PC-3 (cell line): ENCODE measurements at regions of chr7 and their contacts with region 1.

Region 1: GRCh38 chr7:116122972-116123595 is 87.3 kb upstream of the TES start:
- DNase-seq: peak; percentile 55
- ATAC-seq: peak; percentile 20; the same call in 1 of the 2 replicates
- H3K4me3 ChIP-seq: no peak overlapping the region
- H3K27ac ChIP-seq: no peak overlapping the region
- H3K4me1 ChIP-seq: no peaks in the 10 kb centered on the region
- H3K27me3 ChIP-seq: peaks cover 18% of the 10 kb centered on the region; the same call in 1 of the 2 replicates
- CTCF ChIP-seq: peak; percentile 88

Region 2: GRCh38 chr7:115910541-115911164 is 212.4 kb before region 1 on chr7:
- CTCF ChIA-PET with region 1: no interaction called
- POLR2A ChIA-PET with region 1: no interaction called
- intact Hi-C with region 1: loop called (anchors 2 kb)
- DNase-seq: peak; percentile 53
- ATAC-seq: peak; percentile 54; the same call in 1 of the 2 replicates
- H3K4me3 ChIP-seq: no peak overlapping the region
- H3K27ac ChIP-seq: no peak overlapping the region
- H3K4me1 ChIP-seq: no peaks in the 10 kb centered on the region
- H3K27me3 ChIP-seq: peaks cover 82% of the 10 kb centered on the region
- CTCF ChIP-seq: peak; percentile 73

Region 3: DNA sequence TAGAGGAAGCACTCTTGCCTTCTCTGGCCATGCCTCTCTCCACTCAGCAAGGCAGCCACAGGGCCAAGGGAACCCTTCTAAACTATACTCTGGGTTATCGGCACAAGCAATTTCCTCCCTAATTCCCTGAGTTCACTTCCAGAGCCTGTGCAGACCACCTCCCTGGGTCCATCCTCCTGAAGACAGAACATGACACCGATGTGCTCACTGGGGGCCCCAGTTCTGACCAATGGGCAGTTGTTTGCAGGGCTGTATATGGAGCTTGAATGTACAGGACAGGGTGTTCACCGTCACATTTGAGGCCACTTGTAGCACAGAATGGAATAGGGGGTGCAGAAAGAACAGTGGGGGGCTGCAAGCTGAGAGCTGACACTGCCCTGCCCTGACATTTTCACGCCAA is 170.3 kb before region 1 on chr7:
- CTCF ChIA-PET with region 1: no interaction called
- POLR2A ChIA-PET with region 1: no interaction called
- intact Hi-C with region 1: no loop called
- DNase-seq: no peak
- ATAC-seq: no peak
- H3K4me3 ChIP-seq: no peak overlapping the region
- H3K27ac ChIP-seq: no peak overlapping the region
- H3K4me1 ChIP-seq: no peaks in the 10 kb centered on the region
- H3K27me3 ChIP-seq: peaks cover 7% of the 10 kb centered on the region; the same call in 1 of the 2 replicates
- CTCF ChIP-seq: no peak

Region 4: GRCh38 chr7:116028787-116029186 is 94.3 kb before region 1 on chr7:
- CTCF ChIA-PET with region 1: no interaction called
- POLR2A ChIA-PET with region 1: no interaction called
- intact Hi-C with region 1: loop called (anchors 1 kb)
- DNase-seq: no peak
- ATAC-seq: no peak
- H3K4me3 ChIP-seq: no peak overlapping the region
- H3K27ac ChIP-seq: no peak overlapping the region
- H3K4me1 ChIP-seq: no peaks in the 10 kb centered on the region
- H3K27me3 ChIP-seq: peaks cover 25% of the 10 kb centered on the region
- CTCF ChIP-seq: no peak